CD8-positive, alpha-beta T cell (primary cell): ENCODE measurements at regions of chr16 and their contacts with region 1.

Region 1: DNA sequence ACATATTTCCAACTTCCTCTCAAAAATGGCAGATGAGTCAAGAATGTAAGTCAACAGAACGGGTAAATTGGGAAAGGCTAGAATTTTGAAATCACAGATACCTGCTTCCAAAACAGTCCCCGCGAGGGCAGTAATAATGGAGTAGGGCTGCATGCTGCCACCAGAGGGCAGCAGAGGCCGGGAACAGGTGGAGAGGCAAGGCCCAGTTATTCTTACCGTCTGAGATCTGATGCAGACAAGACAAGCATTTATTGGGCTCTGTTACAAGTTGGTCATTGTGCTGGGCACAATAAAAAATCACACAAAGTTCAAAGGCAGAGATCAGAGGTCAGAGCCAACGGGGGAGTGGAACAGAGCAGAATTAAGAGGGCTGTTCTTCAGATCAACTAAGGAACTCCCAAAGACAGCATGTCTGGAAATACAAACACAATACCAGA is 8.8 kb upstream of the MLKL start:
- DNase-seq: peak; percentile 63 to 89 (median 83)
- ATAC-seq: peak; percentile 100
- H3K4me3 ChIP-seq: no peak overlapping the region
- H3K4me3 Mint-ChIP-seq: no peak overlapping the region
- H3K27ac ChIP-seq: no peak overlapping the region
- H3K27ac Mint-ChIP-seq: no peak overlapping the region
- H3K4me1 ChIP-seq: no peaks in the 10 kb centered on the region
- H3K4me1 Mint-ChIP-seq: peaks cover 2% of the 10 kb centered on the region
- H3K27me3 ChIP-seq: no peaks in the 10 kb centered on the region
- H3K27me3 Mint-ChIP-seq: no peaks in the 10 kb centered on the region
- CTCF ChIP-seq: peak; percentile 97

Region 2: GRCh38 chr16:73369851-73370250 is 1339.6 kb before region 1 on chr16:
- CTCF ChIA-PET with region 1: no interaction called
- POLR2A ChIA-PET with region 1: no interaction called
- intact Hi-C with region 1: no loop called
- DNase-seq: no peak
- ATAC-seq: no peak
- H3K4me3 ChIP-seq: no peak overlapping the region
- H3K4me3 Mint-ChIP-seq: no peak overlapping the region
- H3K27ac ChIP-seq: no peak overlapping the region
- H3K27ac Mint-ChIP-seq: no peak overlapping the region
- H3K4me1 ChIP-seq: no peaks in the 10 kb centered on the region
- H3K4me1 Mint-ChIP-seq: no peaks in the 10 kb centered on the region
- H3K27me3 ChIP-seq: no peaks in the 10 kb centered on the region
- H3K27me3 Mint-ChIP-seq: no peaks in the 10 kb centered on the region
- CTCF ChIP-seq: no peak

Region 3: DNA sequence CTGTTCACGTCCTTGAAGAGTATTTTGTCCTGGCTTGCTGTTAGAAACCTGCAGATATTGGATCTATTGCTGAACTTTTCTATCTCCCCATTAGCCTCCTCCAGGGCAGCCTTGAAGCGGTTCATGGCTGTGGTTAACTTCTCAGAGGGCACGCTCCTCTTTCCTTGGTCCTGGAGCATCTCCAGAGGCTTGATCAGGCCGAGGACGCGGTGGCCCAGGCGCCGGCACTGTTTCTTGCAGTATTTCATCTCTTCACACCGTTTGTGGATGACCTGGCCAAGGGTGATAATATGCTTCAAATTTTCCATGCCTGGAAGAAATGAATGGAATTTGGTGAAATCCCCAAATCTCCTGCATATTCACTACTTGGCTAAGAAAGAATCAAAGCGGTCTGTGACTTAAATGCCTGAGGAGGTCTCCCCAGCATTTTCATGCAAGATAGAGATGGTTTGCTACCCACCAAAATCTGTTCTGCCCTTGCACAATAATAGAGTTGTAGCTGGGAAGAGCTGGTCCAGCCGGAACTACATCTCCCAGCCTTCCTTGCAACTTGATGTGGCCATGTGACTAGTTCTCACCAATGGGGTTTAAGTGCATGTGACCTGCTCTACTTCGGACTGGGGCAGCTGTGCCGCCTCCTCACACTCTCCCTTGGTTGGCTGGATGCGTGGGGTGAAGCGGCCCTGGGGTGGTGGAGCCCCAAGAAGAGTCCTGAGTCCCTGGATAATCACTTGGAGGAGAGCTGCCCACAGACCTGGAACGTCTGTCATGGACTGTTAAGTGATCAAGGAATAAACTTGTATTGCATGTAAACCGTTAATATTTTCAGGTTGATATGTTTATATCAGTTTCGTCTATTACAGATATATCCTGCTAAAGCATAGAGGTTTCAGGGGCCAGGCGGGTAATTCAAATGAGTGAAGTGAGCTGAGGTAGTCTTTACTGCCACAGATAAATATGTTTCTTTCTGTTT is 13.7 kb before region 1 on chr16:
- CTCF ChIA-PET with region 1: interaction called, 19 read pairs
- POLR2A ChIA-PET with region 1: interaction called, 3 read pairs
- intact Hi-C with region 1: no loop called
- DNase-seq: peak; percentile 18 to 85 (median 57)
- ATAC-seq: peak; percentile 71
- H3K4me3 ChIP-seq: peak overlapping the region; percentile 21 to 28
- H3K4me3 Mint-ChIP-seq: peak overlapping the region; percentile 78
- H3K27ac ChIP-seq: no peak overlapping the region
- H3K27ac Mint-ChIP-seq: peak overlapping the region; percentile 70
- H3K4me1 ChIP-seq: peaks cover 18% of the 10 kb centered on the region
- H3K4me1 Mint-ChIP-seq: peaks cover 55% of the 10 kb centered on the region
- H3K27me3 ChIP-seq: no peaks in the 10 kb centered on the region
- H3K27me3 Mint-ChIP-seq: no peaks in the 10 kb centered on the region
- CTCF ChIP-seq: no peak

Region 4: DNA sequence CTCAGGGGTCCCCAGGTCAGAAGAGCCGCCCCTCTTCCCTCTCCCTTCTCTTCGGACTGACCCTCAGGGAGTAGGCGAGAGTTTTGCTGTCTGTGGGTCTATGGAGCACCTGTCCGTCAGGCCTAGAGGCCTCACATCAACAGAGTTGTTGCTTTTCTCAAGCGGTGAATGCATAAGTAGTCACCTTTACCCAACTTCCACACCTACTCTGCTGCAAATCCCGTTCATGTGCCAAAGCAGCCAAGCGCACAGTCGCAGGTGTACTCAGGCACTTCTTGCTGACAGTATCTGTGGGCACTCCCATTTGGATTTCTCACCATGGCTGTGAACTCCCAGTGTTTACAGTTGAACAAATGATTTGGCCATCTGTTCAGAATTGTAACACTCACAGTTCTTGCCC is 69.2 kb after region 1 on chr16:
- CTCF ChIA-PET with region 1: no interaction called
- POLR2A ChIA-PET with region 1: no interaction called
- intact Hi-C with region 1: loop called in 1 of 2 experiments (anchors 2 kb)
- DNase-seq: no peak
- ATAC-seq: no peak
- H3K4me3 ChIP-seq: no peak overlapping the region
- H3K4me3 Mint-ChIP-seq: no peak overlapping the region
- H3K27ac ChIP-seq: no peak overlapping the region
- H3K27ac Mint-ChIP-seq: no peak overlapping the region
- H3K4me1 ChIP-seq: peaks cover 4% of the 10 kb centered on the region
- H3K4me1 Mint-ChIP-seq: peaks cover 11% of the 10 kb centered on the region
- H3K27me3 ChIP-seq: peaks cover 9 to 11% of the 10 kb centered on the region in 2 experiments
- H3K27me3 Mint-ChIP-seq: peaks cover 20% of the 10 kb centered on the region
- CTCF ChIP-seq: no peak

Region 5: GRCh38 chr16:74862741-74863244 is 153.3 kb after region 1 on chr16:
- CTCF ChIA-PET with region 1: interaction called, 13 read pairs
- POLR2A ChIA-PET with region 1: no interaction called
- intact Hi-C with region 1: loop called (anchors 1 kb)
- DNase-seq: peak in 2 of 9 experiments; percentile 36 to 50
- ATAC-seq: no peak
- H3K4me3 ChIP-seq: no peak overlapping the region
- H3K4me3 Mint-ChIP-seq: no peak overlapping the region
- H3K27ac ChIP-seq: no peak overlapping the region
- H3K27ac Mint-ChIP-seq: no peak overlapping the region
- H3K4me1 ChIP-seq: peaks cover 6% of the 10 kb centered on the region
- H3K4me1 Mint-ChIP-seq: peaks cover 11% of the 10 kb centered on the region
- H3K27me3 ChIP-seq: no peaks in the 10 kb centered on the region
- H3K27me3 Mint-ChIP-seq: no peaks in the 10 kb centered on the region
- CTCF ChIP-seq: peak; percentile 47

Region 6: GRCh38 chr16:75385507-75386152 is 676.2 kb after region 1 on chr16:
- CTCF ChIA-PET with region 1: no interaction called
- POLR2A ChIA-PET with region 1: no interaction called
- intact Hi-C with region 1: loop called in 1 of 2 experiments (anchors 10 kb)
- DNase-seq: peak in 3 of 9 experiments; percentile 5 to 79 (median 70)
- ATAC-seq: peak; percentile 26
- H3K4me3 ChIP-seq: no peak overlapping the region
- H3K4me3 Mint-ChIP-seq: no peak overlapping the region
- H3K27ac ChIP-seq: no peak overlapping the region
- H3K27ac Mint-ChIP-seq: no peak overlapping the region
- H3K4me1 ChIP-seq: peaks cover 4% of the 10 kb centered on the region
- H3K4me1 Mint-ChIP-seq: peaks cover 16% of the 10 kb centered on the region
- H3K27me3 ChIP-seq: no peaks in the 10 kb centered on the region
- H3K27me3 Mint-ChIP-seq: no peaks in the 10 kb centered on the region
- CTCF ChIP-seq: peak; percentile 75